Right ventricle myocardium inferior (tissue), 1 donor: ENCODE measurements at regions of chr17 and their contacts with region 1.

Region 1: DNA sequence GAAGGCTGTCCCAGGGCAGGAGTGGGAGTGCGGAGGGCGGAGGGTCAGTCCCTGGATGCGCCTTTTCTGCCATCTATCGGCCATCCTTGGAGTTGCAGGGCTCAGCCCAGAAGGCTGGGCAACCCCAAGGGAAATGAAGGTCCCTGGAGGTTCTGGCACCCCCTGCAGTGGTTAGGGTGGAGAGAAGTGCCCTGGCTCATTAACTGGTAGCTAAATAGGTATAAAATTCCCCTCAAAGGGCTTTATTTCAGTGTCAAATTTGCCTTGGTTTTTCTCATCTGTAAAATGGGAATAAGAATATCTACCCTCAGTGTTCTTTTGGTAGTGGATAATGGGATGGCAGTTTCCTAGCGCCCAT is 22.4 kb downstream of the C17orf75 start:
- DNase-seq: peak; percentile 86
- ATAC-seq: peak; percentile 93

Region 2: DNA sequence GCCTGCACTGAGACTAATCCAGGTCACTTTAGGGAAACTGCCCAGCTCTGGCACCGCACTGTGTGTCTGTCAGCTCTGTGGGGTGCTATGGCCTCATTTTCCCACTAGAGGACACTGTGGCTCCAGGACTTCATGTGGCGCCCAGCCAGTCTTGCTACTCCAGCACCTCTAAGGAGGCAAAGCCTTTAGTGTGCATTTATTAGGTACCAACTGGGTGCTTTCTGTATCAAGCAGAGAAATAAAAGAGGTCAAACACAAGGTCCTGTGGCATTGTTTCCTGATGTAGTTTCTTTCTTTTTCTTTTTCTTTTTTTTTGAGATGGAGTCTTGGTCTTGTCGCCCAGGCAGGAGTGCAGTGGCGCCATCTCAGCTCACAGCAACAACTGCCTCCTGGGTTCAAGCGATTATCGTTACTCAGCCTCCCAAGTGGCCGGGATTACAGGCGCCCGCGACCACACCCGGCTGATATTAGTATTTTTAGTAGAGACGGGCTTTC is 66.4 kb before region 1 on chr17:
- intact Hi-C with region 1: loop called (anchors 1 kb)
- DNase-seq: peak; percentile 87
- ATAC-seq: peak; percentile 95